H1 (cell line): ENCODE measurements at regions of chr22 and their contacts with region 1.

Region 1: DNA sequence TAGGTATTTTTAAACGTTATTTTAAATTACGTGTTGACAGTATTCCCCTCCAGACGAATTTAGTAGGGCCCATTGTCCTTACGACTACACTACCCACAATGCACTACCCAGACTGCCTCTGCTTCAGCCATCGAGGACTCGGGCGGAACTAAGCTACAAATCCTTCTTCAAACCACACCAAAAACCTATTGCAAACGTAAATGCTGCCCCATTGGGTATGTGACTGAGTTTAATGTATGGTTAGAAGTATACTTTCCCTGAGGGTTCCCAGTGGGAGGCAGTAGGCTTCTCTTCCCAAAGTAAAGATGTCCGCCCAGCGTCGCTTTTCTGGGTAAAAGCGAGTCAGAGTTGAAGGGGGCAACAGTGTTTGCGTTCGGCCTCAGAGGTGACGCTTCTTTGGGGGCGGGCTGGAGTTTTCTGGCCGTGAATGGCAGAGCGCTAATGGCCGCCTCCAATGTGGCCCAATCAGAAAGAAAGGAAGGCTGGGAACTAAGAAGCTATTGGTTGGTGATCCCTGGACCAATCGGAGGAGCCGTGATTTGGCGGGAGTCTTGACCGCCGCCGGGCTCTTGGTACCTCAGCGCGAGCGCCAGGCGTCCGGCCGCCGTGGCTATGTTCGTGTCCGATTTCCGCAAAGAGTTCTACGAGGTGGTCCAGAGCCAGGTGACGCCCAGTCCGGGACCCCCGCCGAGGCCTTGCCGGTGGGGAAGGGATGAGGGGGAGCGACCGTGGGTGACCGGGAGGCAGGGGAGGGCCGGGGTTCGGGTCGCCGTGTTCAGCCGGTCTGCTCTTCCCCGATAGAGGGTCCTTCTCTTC is at the start of gene CDC45:
- DNase-seq: peak; percentile 88
- H3K4me3 ChIP-seq: peak within 1 kb of the TSS; percentile 87 to 99 (median 94)
- H3K27ac ChIP-seq: peak within 1 kb of the TSS; percentile 100
- H3K4me1 ChIP-seq: peaks cover 0 to 8% (median 1%) of the 10 kb centered on the region in 4 experiments; a peak in 2 of 7 replicates
- H3K27me3 ChIP-seq: no peaks in the 10 kb centered on the region
- CTCF ChIP-seq: no peak
- EP300 ChIP-seq: no peak
- POLR2A ChIP-seq: peak; percentile 73 to 86
- RAD21 ChIP-seq: no peak
- total RNA-seq, gene CDC45: 31.9 and 32.6 TPM in 2 replicates

Region 2: GRCh38 chr22:19447388-19448075 is 32.0 kb before region 1 on chr22 and contains the start of gene C22orf39:
- CTCF ChIA-PET with region 1: interaction called, 6 read pairs
- POLR2A ChIA-PET with region 1: interaction called, 13 read pairs
- DNase-seq: peak; percentile 79 to 92
- H3K4me3 ChIP-seq: peak within 1 kb of the TSS; percentile 81 to 96 (median 92)
- H3K27ac ChIP-seq: peak within 1 kb of the TSS; percentile 90
- H3K4me1 ChIP-seq: peaks cover 0 to 8% (median 3%) of the 10 kb centered on the region in 4 experiments; a peak in 2 of 7 replicates
- H3K27me3 ChIP-seq: no peaks in the 10 kb centered on the region; a peak in 2 of 7 replicates
- CTCF ChIP-seq: no peak
- EP300 ChIP-seq: no peak
- POLR2A ChIP-seq: peak; percentile 77 to 87
- RAD21 ChIP-seq: no peak
- total RNA-seq, gene C22orf39: 22.7 and 28.2 TPM in 2 replicates